ENCODE measurements at regions of chr11 and their contacts with region 1.

Region 1: GRCh38 chr11:57644748-57645688 is 4.7 kb downstream of the YPEL4 start:
- DNase-seq: no peak
- ATAC-seq: peak; percentile 77
- H3K4me3 ChIP-seq: no peak overlapping the region
- H3K27ac ChIP-seq: no peak overlapping the region
- H3K4me1 ChIP-seq: peaks cover 25% of the 10 kb centered on the region
- H3K27me3 ChIP-seq: peaks cover 10% of the 10 kb centered on the region; the same call in 1 of the 2 replicates
- CTCF ChIP-seq: peak; percentile 94

Region 2: GRCh38 chr11:57456960-57457642 is 187.9 kb before region 1 on chr11:
- CTCF ChIA-PET with region 1: interaction called, 5 read pairs
- POLR2A ChIA-PET with region 1: no interaction called
- in situ Hi-C with region 1: no loop called
- intact Hi-C with region 1: loop called (anchors 10 kb)
- DNase-seq: peak; percentile 64
- ATAC-seq: peak; percentile 85
- H3K4me3 ChIP-seq: peak overlapping the region in 1 of 2 experiments; percentile 32; a peak in 1 of 4 replicates
- H3K27ac ChIP-seq: no peak overlapping the region
- H3K4me1 ChIP-seq: peaks cover 4% of the 10 kb centered on the region; the same call in 1 of the 2 replicates
- H3K27me3 ChIP-seq: peaks cover 6% of the 10 kb centered on the region; the same call in 1 of the 2 replicates
- CTCF ChIP-seq: peak; percentile 98

Region 3: GRCh38 chr11:57556061-57556460 is 89.0 kb before region 1 on chr11:
- CTCF ChIA-PET with region 1: no interaction called
- POLR2A ChIA-PET with region 1: no interaction called
- in situ Hi-C with region 1: no loop called
- intact Hi-C with region 1: no loop called
- DNase-seq: no peak
- ATAC-seq: no peak
- H3K4me3 ChIP-seq: no peak overlapping the region
- H3K27ac ChIP-seq: no peak overlapping the region
- H3K4me1 ChIP-seq: no peaks in the 10 kb centered on the region
- H3K27me3 ChIP-seq: no peaks in the 10 kb centered on the region
- CTCF ChIP-seq: no peak

Region 4: DNA sequence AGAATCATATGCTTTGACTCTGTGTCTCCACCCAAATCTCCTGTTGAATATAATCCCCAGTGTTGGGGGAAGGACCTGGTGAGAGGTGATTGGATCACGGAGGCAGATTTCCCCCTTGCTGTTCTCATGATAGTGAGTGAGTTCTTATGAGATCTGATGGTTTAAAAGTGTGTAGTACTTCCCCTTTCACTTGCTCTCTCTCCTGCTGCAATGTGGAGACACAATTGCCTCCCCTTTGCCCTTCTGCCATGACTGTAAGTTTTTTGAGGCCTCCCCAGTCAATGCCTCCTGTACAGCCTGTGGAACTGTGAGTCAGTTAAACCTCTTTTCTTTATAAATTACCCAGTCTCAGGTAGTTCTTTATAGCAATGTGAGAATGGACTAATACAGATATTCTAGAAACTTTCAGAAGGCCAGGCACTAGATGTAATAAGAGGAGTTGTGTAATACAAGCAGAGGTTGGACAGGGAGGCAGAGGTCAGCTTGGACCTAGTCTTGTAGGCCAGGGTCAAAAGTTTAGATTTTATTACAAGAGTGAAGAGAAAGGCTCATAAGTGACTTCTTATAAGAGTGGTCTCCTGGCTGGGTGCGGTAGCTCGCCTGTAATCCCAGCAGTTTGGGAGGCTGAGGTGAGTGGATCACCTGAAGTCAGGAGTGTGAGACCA is 56.8 kb before region 1 on chr11:
- CTCF ChIA-PET with region 1: no interaction called
- POLR2A ChIA-PET with region 1: no interaction called
- in situ Hi-C with region 1: no loop called
- intact Hi-C with region 1: no loop called
- DNase-seq: no peak
- ATAC-seq: no peak
- H3K4me3 ChIP-seq: no peak overlapping the region
- H3K27ac ChIP-seq: no peak overlapping the region
- H3K4me1 ChIP-seq: no peaks in the 10 kb centered on the region
- H3K27me3 ChIP-seq: no peaks in the 10 kb centered on the region
- CTCF ChIP-seq: no peak